HepG2 (cell line): ENCODE measurements at regions of chr9 and their contacts with region 1.

Region 1: GRCh38 chr9:6399071-6399470 is 13.9 kb upstream of the UHRF2 start:
- DNase-seq: no peak
- ATAC-seq: no peak; the same call in none of the 3 replicates
- H3K4me3 ChIP-seq: no peak overlapping the region
- H3K27ac ChIP-seq: no peak overlapping the region
- H3K4me1 ChIP-seq: peaks cover 12% of the 10 kb centered on the region
- H3K27me3 ChIP-seq: peaks cover 0 to 4% of the 10 kb centered on the region in 2 experiments; a peak in 1 of 5 replicates
- CTCF ChIP-seq: no peak
- EP300 ChIP-seq: no peak
- POLR2A ChIP-seq: no peak
- RAD21 ChIP-seq: no peak

Region 2: DNA sequence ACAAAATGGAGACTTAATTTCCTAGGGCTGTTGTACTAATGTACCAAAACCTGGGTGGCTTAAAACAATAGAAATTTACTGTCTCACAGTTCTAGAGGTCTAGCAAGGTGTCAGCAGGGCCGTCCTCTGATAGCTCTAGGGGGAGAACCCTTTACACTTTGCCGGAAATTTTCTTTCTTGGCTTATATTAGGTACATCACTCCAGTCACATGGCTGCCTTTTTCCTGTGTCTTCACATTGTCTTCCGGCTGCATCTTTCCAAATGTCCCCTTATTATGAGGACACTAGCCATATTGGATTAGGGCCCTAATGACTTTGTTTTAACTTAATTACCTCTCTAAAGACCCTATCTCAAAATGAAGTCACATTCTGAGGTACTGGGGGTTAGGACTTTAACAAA is 19.7 kb after region 1 on chr9:
- CTCF ChIA-PET with region 1: no interaction called
- POLR2A ChIA-PET with region 1: interaction called, 3 read pairs
- in situ Hi-C with region 1: no loop called
- intact Hi-C with region 1: loop called (anchors 1 kb)
- DNase-seq: no peak
- ATAC-seq: no peak
- H3K4me3 ChIP-seq: no peak overlapping the region
- H3K27ac ChIP-seq: no peak overlapping the region
- H3K4me1 ChIP-seq: peaks cover 52% of the 10 kb centered on the region
- H3K27me3 ChIP-seq: no peaks in the 10 kb centered on the region
- CTCF ChIP-seq: no peak
- EP300 ChIP-seq: no peak
- POLR2A ChIP-seq: no peak
- RAD21 ChIP-seq: no peak

Region 3: DNA sequence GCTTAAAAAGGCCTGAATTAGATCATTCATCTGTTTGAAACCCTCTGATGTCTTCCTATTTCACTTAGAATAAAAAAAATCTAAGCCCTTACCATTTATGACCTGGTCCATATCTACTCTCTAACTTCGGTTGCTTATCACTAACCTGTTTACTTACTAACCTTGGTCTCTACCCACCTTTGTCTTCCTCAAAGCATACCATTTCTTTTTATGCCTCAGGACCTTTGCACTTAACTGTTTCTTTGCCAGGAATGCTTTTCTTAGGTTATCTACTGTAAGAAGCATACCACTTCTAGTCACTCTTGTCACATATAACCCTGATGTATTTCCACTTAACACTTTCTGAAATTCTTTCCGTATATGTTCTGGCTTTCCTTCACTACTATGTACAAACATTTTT is 80.9 kb after region 1 on chr9:
- CTCF ChIA-PET with region 1: no interaction called
- POLR2A ChIA-PET with region 1: no interaction called
- in situ Hi-C with region 1: no loop called
- intact Hi-C with region 1: no loop called
- DNase-seq: no peak
- ATAC-seq: no peak
- H3K4me3 ChIP-seq: no peak overlapping the region
- H3K27ac ChIP-seq: no peak overlapping the region
- H3K4me1 ChIP-seq: peaks cover 21% of the 10 kb centered on the region
- H3K27me3 ChIP-seq: no peaks in the 10 kb centered on the region
- CTCF ChIP-seq: no peak
- EP300 ChIP-seq: no peak
- POLR2A ChIP-seq: no peak
- RAD21 ChIP-seq: no peak

Region 4: DNA sequence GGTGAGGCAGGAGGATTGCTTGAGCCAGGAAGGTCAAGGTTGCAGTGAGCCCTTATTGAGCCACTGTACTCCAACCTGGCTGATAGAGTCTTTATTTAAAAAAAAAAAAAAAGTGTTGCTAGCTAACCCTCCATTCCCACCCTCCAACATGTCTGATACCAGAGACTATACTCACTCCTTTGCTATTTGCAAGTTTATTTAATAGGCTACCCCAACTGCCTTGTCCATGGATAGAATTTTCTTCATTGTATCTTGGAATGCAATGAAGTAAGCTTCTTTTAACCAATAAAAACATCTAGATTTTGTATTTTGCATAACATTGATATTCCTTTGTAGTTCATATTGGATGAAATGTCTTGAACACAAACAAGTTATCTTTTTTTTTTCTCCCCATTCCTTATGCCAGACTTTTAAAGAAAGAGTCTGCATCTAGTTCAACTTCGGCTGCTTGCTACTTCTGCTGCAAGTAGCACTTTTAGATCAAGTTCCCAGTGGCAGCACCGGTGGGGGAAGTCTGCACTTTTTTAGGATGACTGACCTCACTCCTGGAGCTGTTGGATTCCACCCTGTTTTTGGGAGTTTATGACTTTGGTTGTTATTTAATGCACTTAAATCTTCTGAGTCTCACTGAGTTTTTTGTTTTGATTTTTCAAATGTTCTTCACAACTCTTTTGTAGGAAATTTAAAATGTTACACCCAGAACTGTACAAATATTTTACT is 126.4 kb after region 1 on chr9:
- CTCF ChIA-PET with region 1: no interaction called
- POLR2A ChIA-PET with region 1: no interaction called
- in situ Hi-C with region 1: no loop called
- intact Hi-C with region 1: no loop called
- DNase-seq: no peak
- ATAC-seq: no peak
- H3K4me3 ChIP-seq: no peak overlapping the region
- H3K27ac ChIP-seq: peak overlapping the region; percentile 32
- H3K4me1 ChIP-seq: peaks cover 12% of the 10 kb centered on the region
- H3K27me3 ChIP-seq: no peaks in the 10 kb centered on the region
- CTCF ChIP-seq: no peak
- EP300 ChIP-seq: no peak
- POLR2A ChIP-seq: no peak
- RAD21 ChIP-seq: no peak